Sigmoid colon (tissue), 7 donors: ENCODE measurements at regions of chr1 and their contacts with region 1.

Region 1: GRCh38 chr1:8217011-8217711 is 100.8 kb upstream of the SLC45A1 start:
- DNase-seq: peak; percentile 75
- H3K4me3 ChIP-seq: peak overlapping the region; percentile 7 to 56 (median 46)
- H3K27ac ChIP-seq: peak overlapping the region; percentile 73 to 80 (median 76)
- H3K4me1 ChIP-seq: peaks cover 0 to 34% (median 22%) of the 10 kb centered on the region in 4 donors
- H3K27me3 ChIP-seq: no peaks in the 10 kb centered on the region
- CTCF ChIP-seq: no peak
- EP300 ChIP-seq: no peak
- POLR2A ChIP-seq: no peak

Region 2: GRCh38 chr1:8026153-8026975 is 190.8 kb before region 1 on chr1 and contains the start of gene ERRFI1:
- intact Hi-C with region 1: loop called (anchors 5 kb)
- DNase-seq: peak; percentile 98
- H3K4me3 ChIP-seq: peak within 1 kb of the TSS; percentile 63 to 97 (median 84)
- H3K27ac ChIP-seq: peak within 1 kb of the TSS; percentile 96 to 99 (median 97)
- H3K4me1 ChIP-seq: peaks cover 3 to 61% (median 54%) of the 10 kb centered on the region in 4 donors
- H3K27me3 ChIP-seq: no peaks in the 10 kb centered on the region
- CTCF ChIP-seq: no peak
- EP300 ChIP-seq: no peak
- POLR2A ChIP-seq: peak; percentile 71 to 85
- total RNA-seq, gene ERRFI1: 81.1 to 131 (median 101) TPM

Region 3: GRCh38 chr1:8061210-8061609 is 156.0 kb before region 1 on chr1:
- intact Hi-C with region 1: no loop called
- DNase-seq: no peak
- H3K4me3 ChIP-seq: no peak overlapping the region
- H3K27ac ChIP-seq: peak overlapping the region; percentile 48 to 79 (median 72)
- H3K4me1 ChIP-seq: peaks cover 0 to 51% (median 35%) of the 10 kb centered on the region in 4 donors
- H3K27me3 ChIP-seq: no peaks in the 10 kb centered on the region
- CTCF ChIP-seq: no peak
- EP300 ChIP-seq: peak in 1 of 4 donors; percentile 15
- POLR2A ChIP-seq: no peak